ENCODE measurements at regions of chr17 and their contacts with region 1.

Region 1: DNA sequence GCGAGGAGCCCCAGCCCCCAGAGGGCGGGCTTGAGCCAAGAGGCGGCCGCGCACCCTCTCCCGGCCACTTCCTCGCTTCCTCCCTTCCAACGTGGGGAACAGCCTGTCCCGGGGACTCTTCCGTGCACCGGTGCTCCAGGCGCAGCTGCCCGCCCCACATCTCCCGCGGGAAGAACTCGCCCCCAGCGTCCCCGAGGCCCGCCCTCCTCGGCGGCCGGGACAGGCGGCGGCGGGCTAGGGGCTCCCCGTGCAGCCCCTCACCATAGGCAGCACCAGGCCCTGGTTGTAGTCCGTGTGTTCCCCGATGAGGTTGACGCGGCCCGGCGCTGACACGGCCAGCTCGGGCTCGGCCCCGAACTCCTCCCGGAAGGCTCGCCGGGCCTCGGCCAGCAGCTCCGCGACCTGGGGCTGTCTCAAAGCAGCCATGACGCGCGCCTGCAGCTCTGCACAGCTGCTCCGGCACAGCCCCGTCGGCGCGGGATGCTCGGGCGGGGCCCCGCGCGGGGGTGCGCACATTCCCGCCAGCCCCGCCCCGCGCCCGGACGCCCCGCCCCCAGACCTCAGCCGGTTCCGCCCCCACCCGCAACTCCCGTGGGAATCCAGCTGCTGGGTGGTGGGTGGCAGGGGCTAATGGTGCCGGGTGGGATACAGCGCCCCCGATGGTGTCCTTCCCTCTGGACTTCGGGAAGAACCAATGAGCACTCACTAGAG is at the start of gene GALK1:
- DNase-seq: peak; percentile 69 to 80 (median 78)
- H3K4me3 ChIP-seq: peak within 1 kb of the TSS; percentile 55 to 86 (median 75)
- H3K27ac ChIP-seq: peak within 1 kb of the TSS in 1 of 2 experiments; percentile 61
- H3K4me1 ChIP-seq: peaks cover 0 to 19% (median 17%) of the 10 kb centered on the region in 4 experiments
- H3K27me3 ChIP-seq: no peaks in the 10 kb centered on the region

Region 2: GRCh38 chr17:75779231-75779986 is 14.5 kb after region 1 on chr17:
- CTCF ChIA-PET with region 1: interaction called, 85 read pairs
- POLR2A ChIA-PET with region 1: interaction called, 37 read pairs
- DNase-seq: peak; percentile 99 to 100 (median 100)
- H3K4me3 ChIP-seq: peak overlapping the region; percentile 84 to 99 (median 90)
- H3K27ac ChIP-seq: peak overlapping the region; percentile 89 to 96
- H3K4me1 ChIP-seq: peaks cover 28 to 51% (median 34%) of the 10 kb centered on the region in 4 experiments
- H3K27me3 ChIP-seq: no peaks in the 10 kb centered on the region

Region 3: GRCh38 chr17:75784473-75785015 is 19.7 kb after region 1 on chr17 and contains the start of gene UNK:
- CTCF ChIA-PET with region 1: interaction called, 17 read pairs
- POLR2A ChIA-PET with region 1: interaction called, 13 read pairs
- DNase-seq: peak; percentile 99
- H3K4me3 ChIP-seq: peak within 1 kb of the TSS; percentile 67 to 91 (median 81)
- H3K27ac ChIP-seq: peak within 1 kb of the TSS; percentile 98 to 99
- H3K4me1 ChIP-seq: peaks cover 30 to 52% (median 38%) of the 10 kb centered on the region in 4 experiments
- H3K27me3 ChIP-seq: no peaks in the 10 kb centered on the region

Region 4: GRCh38 chr17:75819108-75820077 is 54.5 kb after region 1 on chr17:
- CTCF ChIA-PET with region 1: interaction called, 12 read pairs
- POLR2A ChIA-PET with region 1: no interaction called
- DNase-seq: no peak
- H3K4me3 ChIP-seq: no peak overlapping the region
- H3K27ac ChIP-seq: no peak overlapping the region
- H3K4me1 ChIP-seq: peaks cover 0 to 18% (median 12%) of the 10 kb centered on the region in 4 experiments
- H3K27me3 ChIP-seq: no peaks in the 10 kb centered on the region